ENCODE measurements at regions of chr3 and their contacts with region 1.

Region 1: DNA sequence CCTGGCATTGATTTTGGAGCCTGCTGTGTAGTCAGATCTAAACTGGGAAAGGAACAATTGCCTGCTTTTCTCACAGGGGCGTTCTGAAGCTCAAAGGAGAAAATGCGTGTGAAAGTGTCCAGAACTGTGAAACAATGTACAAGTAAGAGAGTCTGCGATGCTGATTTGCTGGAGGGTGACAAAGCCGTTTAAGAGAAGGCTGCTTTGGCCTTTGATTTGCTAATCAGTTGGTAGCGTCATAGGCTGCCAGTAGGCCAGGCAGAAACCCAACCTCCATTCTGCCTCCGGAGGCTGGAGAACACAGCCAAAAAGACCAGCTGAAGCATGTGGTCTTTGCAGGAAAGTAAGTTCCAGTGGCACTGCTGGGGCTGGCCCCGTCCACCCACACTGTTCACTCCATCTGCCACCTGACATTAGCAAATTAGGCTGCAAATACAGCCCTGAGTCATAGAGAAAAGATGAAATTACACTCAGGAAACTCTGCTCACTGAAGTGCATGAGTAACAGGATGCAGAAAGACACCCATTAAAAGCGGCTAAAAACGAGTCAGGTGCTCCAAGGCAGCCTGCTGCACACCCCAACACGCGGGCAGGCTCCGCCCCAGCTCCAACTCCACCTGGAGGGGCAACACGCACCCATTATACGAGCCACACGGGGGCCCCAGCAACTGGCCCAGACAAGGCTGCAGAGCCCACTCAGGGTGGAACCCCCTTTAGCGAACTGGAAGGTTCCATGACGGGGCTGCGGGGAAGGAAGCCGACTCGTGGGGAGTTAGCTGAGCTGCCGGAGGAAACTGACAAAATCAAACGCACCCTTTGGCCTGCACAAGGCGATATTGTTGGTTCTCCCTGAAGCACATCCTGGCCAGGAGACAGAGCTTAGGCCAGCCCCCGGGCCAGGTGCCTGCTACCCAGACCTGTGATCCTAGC is 31.6 kb downstream of the ZDHHC19 start:
- DNase-seq: peak; percentile 95
- H3K4me3 Mint-ChIP-seq: peak overlapping the region; percentile 66
- H3K27ac Mint-ChIP-seq: peak overlapping the region; percentile 99
- H3K4me1 Mint-ChIP-seq: peaks cover 54% of the 10 kb centered on the region
- H3K27me3 Mint-ChIP-seq: no peaks in the 10 kb centered on the region

Region 2: DNA sequence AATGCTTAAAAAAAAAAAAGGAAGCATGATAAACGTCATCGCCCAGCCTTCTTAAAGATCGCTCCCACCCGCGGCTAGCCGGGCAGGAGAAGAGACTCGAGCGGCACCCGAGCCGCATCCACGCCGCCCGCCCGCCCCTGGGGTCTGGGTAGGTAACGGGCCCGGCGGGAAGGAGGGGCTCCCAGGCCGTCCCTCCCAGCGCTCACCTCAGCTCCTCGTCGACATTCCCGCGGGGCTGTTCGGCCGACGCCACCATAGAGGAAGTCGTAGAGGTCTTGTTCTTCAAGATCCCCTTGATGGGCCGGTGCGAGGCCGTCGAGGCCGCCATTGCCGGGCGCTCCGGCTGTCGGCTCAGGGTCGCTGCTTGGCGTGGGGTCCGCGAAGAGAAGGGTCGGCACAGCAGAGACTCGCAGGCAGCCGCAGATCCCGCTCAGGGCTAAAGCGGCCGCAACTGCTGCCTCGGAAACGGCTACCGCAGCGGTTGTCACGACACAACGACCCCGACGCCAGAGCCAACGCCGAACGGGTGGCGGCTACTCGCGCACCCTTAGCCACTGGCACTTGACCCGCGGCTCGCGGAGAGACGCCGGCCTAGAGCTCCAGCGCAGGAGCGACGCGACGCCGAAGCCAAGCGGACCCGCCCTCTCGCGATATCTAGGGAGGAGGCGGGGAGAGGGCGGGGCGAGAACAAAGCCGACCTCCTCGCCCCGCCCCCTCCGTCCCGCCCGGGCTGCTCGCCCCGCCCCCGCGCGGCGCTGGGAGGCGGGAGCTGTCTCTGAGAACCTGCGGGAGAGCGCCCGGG is 636.7 kb before region 1 on chr3 and contains the start of gene PPP1R2:
- CTCF ChIA-PET with region 1: no interaction called
- intact Hi-C with region 1: loop called (anchors 5 kb)
- DNase-seq: peak; percentile 93
- H3K4me3 Mint-ChIP-seq: peak within 1 kb of the TSS; percentile 88
- H3K27ac Mint-ChIP-seq: peak within 1 kb of the TSS; percentile 94
- H3K4me1 Mint-ChIP-seq: peaks cover 53% of the 10 kb centered on the region
- H3K27me3 Mint-ChIP-seq: no peaks in the 10 kb centered on the region
- total RNA-seq, gene PPP1R2: 99.7 to 105 TPM

Region 3: DNA sequence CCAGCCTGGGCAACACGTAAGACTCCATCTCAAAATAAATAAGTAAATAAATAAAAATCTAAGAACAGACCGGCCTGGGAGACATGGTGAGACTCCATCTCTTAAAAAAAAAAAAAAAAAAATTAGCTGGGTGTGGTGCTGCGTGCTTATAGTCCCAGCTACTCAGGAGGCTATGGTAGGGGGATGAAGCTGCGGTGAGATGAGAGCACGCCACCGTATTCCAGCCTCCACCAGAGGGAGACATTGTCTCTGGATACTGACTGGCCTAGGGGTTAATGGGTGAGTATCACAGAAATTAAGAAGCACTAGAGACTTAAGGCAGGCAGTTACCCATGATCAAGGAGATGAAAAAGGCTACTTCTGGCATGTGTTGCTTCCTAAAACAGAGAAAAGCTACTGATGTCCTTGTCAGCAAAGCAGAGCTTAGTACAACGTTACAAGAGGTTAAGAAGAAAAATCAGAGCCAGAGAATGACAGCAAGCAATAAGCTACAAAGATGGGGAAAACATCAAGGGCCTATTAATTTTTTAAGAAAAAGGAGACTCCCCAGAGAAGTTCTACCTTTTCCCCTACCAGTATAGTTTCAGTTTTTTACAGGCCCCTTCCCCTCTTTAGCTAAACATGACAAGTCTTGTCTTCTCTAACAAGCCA is 106.3 kb before region 1 on chr3:
- CTCF ChIA-PET with region 1: interaction called, 19 read pairs
- intact Hi-C with region 1: no loop called
- DNase-seq: peak; percentile 81
- H3K4me3 Mint-ChIP-seq: no peak overlapping the region
- H3K27ac Mint-ChIP-seq: peak overlapping the region; percentile 82
- H3K4me1 Mint-ChIP-seq: peaks cover 34% of the 10 kb centered on the region
- H3K27me3 Mint-ChIP-seq: no peaks in the 10 kb centered on the region

Region 4: GRCh38 chr3:196111939-196112386 is 67.7 kb before region 1 on chr3:
- CTCF ChIA-PET with region 1: interaction called, 6 read pairs
- intact Hi-C with region 1: loop called (anchors 1 kb)
- DNase-seq: peak; percentile 60
- H3K4me3 Mint-ChIP-seq: peak overlapping the region; percentile 63
- H3K27ac Mint-ChIP-seq: peak overlapping the region; percentile 90
- H3K4me1 Mint-ChIP-seq: peaks cover 22% of the 10 kb centered on the region
- H3K27me3 Mint-ChIP-seq: no peaks in the 10 kb centered on the region

Region 5: DNA sequence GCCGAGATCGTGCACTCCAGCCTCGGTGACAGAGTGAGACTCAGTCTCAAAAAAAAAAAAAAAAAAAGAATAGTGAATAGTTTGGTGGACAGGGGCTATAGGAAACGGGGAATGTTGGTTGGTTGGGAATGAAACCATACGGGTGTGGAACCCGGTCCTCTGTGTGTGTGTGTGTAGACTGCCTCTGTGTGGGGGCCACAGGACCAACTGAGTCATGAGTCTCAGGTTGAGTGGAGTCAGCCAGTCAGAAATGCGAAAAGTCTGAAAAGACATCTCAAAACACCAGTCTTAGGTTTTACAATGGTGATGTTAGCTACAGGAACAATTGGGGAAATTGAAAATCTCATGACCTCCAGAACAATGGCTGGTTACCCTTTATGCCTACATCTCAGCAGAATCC is 12.9 kb before region 1 on chr3:
- CTCF ChIA-PET with region 1: no interaction called
- intact Hi-C with region 1: loop called (anchors 1 kb)
- DNase-seq: peak; percentile 52
- H3K4me3 Mint-ChIP-seq: no peak overlapping the region
- H3K27ac Mint-ChIP-seq: peak overlapping the region; percentile 11
- H3K4me1 Mint-ChIP-seq: peaks cover 11% of the 10 kb centered on the region
- H3K27me3 Mint-ChIP-seq: no peaks in the 10 kb centered on the region

Region 6: GRCh38 chr3:196198771-196199753 is 19.4 kb after region 1 on chr3:
- CTCF ChIA-PET with region 1: interaction called, 14 read pairs
- intact Hi-C with region 1: no loop called
- DNase-seq: no peak
- H3K4me3 Mint-ChIP-seq: no peak overlapping the region
- H3K27ac Mint-ChIP-seq: no peak overlapping the region
- H3K4me1 Mint-ChIP-seq: peaks cover 7% of the 10 kb centered on the region
- H3K27me3 Mint-ChIP-seq: no peaks in the 10 kb centered on the region

Region 7: DNA sequence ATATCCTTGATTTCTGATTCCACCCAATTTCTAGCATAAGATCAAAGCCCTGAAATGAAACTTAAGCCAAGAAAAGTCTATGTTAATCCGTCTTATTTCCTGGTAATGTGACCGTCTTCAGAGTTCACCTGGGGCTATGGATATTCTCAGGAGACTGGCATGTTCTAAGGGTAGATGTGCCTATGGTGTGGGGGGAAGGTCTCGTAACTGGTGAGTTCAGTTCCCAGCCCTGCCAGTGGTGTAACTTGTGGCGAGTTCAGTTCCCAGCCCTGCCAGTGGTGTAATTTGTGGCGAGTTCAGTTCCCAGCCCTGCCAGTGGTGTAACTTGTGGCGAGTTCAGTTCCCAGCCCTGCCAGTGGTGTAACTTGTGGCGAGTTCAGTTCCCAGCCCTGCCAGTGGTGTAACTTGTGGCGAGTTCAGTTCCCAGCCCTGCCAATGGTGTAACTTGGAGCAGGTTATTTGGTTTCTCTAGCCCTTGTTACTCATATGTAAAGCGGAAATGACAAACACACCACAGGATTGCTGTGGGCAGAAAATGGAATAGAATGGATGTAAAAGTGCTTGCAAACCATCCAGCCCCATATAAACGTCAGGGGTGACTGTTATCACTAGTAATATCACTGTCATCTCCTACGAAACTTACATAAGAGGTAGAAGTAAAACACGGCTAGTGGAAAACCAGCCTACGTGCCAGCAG is 67.1 kb after region 1 on chr3:
- CTCF ChIA-PET with region 1: no interaction called
- intact Hi-C with region 1: no loop called
- DNase-seq: no peak
- H3K4me3 Mint-ChIP-seq: no peak overlapping the region
- H3K27ac Mint-ChIP-seq: no peak overlapping the region
- H3K4me1 Mint-ChIP-seq: no peaks in the 10 kb centered on the region
- H3K27me3 Mint-ChIP-seq: no peaks in the 10 kb centered on the region

Region 8: GRCh38 chr3:196274585-196274984 is 94.9 kb after region 1 on chr3:
- CTCF ChIA-PET with region 1: no interaction called
- intact Hi-C with region 1: loop called (anchors 1 kb)
- DNase-seq: peak; percentile 86
- H3K4me3 Mint-ChIP-seq: peak overlapping the region; percentile 52
- H3K27ac Mint-ChIP-seq: peak overlapping the region; percentile 94
- H3K4me1 Mint-ChIP-seq: peaks cover 73% of the 10 kb centered on the region
- H3K27me3 Mint-ChIP-seq: no peaks in the 10 kb centered on the region

Region 9: GRCh38 chr3:197168606-197169005 is 989.0 kb after region 1 on chr3:
- CTCF ChIA-PET with region 1: no interaction called
- intact Hi-C with region 1: no loop called
- DNase-seq: no peak
- H3K4me3 Mint-ChIP-seq: no peak overlapping the region
- H3K27ac Mint-ChIP-seq: no peak overlapping the region
- H3K4me1 Mint-ChIP-seq: peaks cover 5% of the 10 kb centered on the region
- H3K27me3 Mint-ChIP-seq: no peaks in the 10 kb centered on the region